HepG2 (cell line): ENCODE measurements at regions of chr3 and their contacts with region 1.

Region 1: GRCh38 chr3:4978204-4978965 is 852 bp upstream of the BHLHE40 start:
- DNase-seq: peak; percentile 91
- ATAC-seq: peak; percentile 74
- H3K4me3 ChIP-seq: peak overlapping the region; percentile 45 to 95 (median 57)
- H3K27ac ChIP-seq: peak overlapping the region; percentile 100
- H3K4me1 ChIP-seq: peaks cover 32% of the 10 kb centered on the region
- H3K27me3 ChIP-seq: no peaks in the 10 kb centered on the region; a peak in 1 of 5 replicates
- CTCF ChIP-seq: no peak; the same call in 1 of the 2 replicates
- EP300 ChIP-seq: peak; percentile 39 to 81; a peak in 3 of 4 replicates
- POLR2A ChIP-seq: peak in 1 of 2 experiments; percentile 83; a peak in 2 of 4 replicates
- RAD21 ChIP-seq: peak; percentile 28; the same call in 1 of the 2 replicates

Region 2: DNA sequence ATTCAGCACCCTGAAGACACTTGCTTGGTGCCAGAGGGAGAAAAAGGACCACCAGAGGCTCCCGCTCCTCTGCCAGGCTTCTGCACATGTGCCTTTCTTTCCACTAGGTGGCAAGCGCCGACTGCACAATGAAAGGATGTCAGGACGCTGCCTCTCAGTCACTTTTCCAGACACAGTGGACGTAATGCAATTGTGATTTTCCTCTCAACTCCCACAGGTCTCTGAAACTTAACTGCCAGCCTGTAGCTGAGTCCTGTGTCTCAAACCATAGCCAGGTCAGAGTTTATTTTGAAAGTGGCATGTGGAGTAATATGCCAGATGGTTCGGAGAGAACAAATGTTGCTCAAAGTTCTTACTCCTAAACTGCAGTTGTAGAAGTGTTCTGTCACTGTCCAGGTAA is 322.3 kb before region 1 on chr3:
- CTCF ChIA-PET with region 1: no interaction called
- POLR2A ChIA-PET with region 1: no interaction called
- in situ Hi-C with region 1: no loop called
- intact Hi-C with region 1: loop called (anchors 2 kb)
- DNase-seq: peak; percentile 30
- ATAC-seq: peak; percentile 97
- H3K4me3 ChIP-seq: no peak overlapping the region
- H3K27ac ChIP-seq: no peak overlapping the region
- H3K4me1 ChIP-seq: no peaks in the 10 kb centered on the region
- H3K27me3 ChIP-seq: no peaks in the 10 kb centered on the region
- CTCF ChIP-seq: peak; percentile 70
- EP300 ChIP-seq: no peak
- POLR2A ChIP-seq: no peak
- RAD21 ChIP-seq: peak; percentile 54

Region 3: GRCh38 chr3:4722103-4722502 is 256.3 kb before region 1 on chr3:
- CTCF ChIA-PET with region 1: interaction called, 4 read pairs
- POLR2A ChIA-PET with region 1: interaction called, 5 read pairs
- in situ Hi-C with region 1: no loop called
- intact Hi-C with region 1: loop called (anchors 1 kb)
- DNase-seq: peak; percentile 56
- ATAC-seq: peak; percentile 76
- H3K4me3 ChIP-seq: no peak overlapping the region
- H3K27ac ChIP-seq: no peak overlapping the region
- H3K4me1 ChIP-seq: peaks cover 36% of the 10 kb centered on the region
- H3K27me3 ChIP-seq: no peaks in the 10 kb centered on the region
- CTCF ChIP-seq: peak; percentile 77
- EP300 ChIP-seq: no peak
- POLR2A ChIP-seq: no peak
- RAD21 ChIP-seq: peak; percentile 44; the same call in 1 of the 2 replicates

Region 4: DNA sequence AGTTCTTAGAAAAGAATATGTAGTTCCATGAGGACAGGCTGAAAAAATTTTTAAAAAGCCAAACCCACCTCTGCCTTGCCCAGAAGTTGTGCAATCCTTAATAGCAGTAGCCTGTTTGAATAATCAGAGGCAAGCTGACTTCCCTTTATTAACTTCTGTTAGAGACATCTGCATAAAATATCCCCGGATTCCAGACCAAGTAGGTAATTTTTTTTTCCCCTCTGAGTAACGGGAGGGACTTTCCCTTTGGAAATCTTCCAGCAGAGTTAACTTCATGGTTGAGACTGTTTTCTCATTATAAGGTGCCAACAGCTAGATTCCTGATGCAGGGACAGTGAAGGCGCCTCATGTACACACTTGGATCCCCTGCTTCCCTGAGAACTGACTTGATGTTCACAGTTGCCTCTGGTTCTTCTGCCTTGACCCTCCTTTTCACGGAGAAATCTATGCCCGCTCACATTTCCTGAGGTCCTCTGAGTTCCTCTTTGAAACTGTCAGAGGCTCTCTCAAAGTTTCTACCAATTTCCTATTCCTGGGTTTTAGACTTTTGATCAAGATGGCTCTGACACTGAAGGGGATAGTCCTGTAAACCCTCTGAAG is 226.8 kb before region 1 on chr3:
- CTCF ChIA-PET with region 1: no interaction called
- POLR2A ChIA-PET with region 1: interaction called, 20 read pairs
- in situ Hi-C with region 1: no loop called
- intact Hi-C with region 1: no loop called
- DNase-seq: peak; percentile 25
- ATAC-seq: no peak
- H3K4me3 ChIP-seq: no peak overlapping the region; a peak in 1 of 6 replicates
- H3K27ac ChIP-seq: peak overlapping the region; percentile 88
- H3K4me1 ChIP-seq: peaks cover 77% of the 10 kb centered on the region
- H3K27me3 ChIP-seq: no peaks in the 10 kb centered on the region
- CTCF ChIP-seq: no peak
- EP300 ChIP-seq: no peak
- POLR2A ChIP-seq: no peak
- RAD21 ChIP-seq: no peak

Region 5: DNA sequence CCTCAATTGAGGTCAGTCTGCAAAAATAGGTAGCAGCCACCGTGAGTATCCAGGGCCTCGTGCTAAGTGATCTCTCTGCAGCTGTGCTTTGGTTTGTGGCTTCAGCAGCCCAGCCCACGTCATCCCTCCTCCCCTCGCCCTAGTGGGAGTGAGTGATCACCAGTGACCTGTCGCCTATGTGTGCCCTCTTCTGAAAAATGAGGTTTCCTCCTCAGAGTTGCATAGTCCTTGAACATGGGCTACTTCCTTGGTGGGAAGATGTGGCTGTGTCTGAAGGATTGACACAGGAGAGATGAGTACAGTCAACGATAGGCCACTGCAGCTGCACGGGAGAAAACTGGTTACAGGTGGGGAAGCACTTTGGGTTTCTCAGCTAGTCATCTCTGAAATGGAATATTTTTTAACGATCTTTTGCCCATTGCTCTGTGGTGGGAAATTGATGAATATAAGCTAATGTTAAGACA is 143.9 kb before region 1 on chr3:
- CTCF ChIA-PET with region 1: no interaction called
- POLR2A ChIA-PET with region 1: no interaction called
- in situ Hi-C with region 1: no loop called
- intact Hi-C with region 1: no loop called
- DNase-seq: no peak
- ATAC-seq: no peak
- H3K4me3 ChIP-seq: no peak overlapping the region
- H3K27ac ChIP-seq: no peak overlapping the region
- H3K4me1 ChIP-seq: no peaks in the 10 kb centered on the region
- H3K27me3 ChIP-seq: no peaks in the 10 kb centered on the region
- CTCF ChIP-seq: no peak
- EP300 ChIP-seq: no peak
- POLR2A ChIP-seq: no peak
- RAD21 ChIP-seq: no peak

Region 6: GRCh38 chr3:4866841-4867240 is 111.5 kb before region 1 on chr3:
- CTCF ChIA-PET with region 1: no interaction called
- POLR2A ChIA-PET with region 1: no interaction called
- in situ Hi-C with region 1: no loop called
- intact Hi-C with region 1: no loop called
- DNase-seq: no peak
- ATAC-seq: no peak
- H3K4me3 ChIP-seq: no peak overlapping the region
- H3K27ac ChIP-seq: no peak overlapping the region
- H3K4me1 ChIP-seq: peaks cover 15% of the 10 kb centered on the region
- H3K27me3 ChIP-seq: no peaks in the 10 kb centered on the region
- CTCF ChIP-seq: no peak
- EP300 ChIP-seq: no peak
- POLR2A ChIP-seq: no peak
- RAD21 ChIP-seq: no peak

Region 7: DNA sequence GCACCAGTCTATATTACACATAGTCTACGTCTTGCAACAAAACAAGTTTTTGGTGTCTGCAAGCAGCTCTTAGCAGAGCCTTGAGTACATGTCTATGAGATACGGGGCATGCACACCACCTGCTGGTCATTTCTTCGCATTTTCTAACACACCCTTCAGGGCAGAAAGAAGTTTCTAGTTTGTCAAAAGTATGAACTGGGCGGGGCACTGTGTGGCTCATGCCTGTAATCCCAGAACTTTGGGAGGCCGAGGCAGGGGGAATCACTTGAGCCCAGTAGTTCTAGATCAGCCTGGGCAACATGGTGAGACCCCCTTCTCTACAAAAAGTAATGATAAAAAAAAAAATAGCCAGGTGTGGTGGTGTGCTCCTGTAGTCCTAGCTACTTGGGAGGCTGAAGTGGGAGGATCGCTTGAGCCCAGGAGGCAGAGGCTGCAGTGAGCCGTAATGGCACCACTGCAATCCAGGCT is 79.5 kb after region 1 on chr3:
- CTCF ChIA-PET with region 1: no interaction called
- POLR2A ChIA-PET with region 1: no interaction called
- in situ Hi-C with region 1: no loop called
- intact Hi-C with region 1: loop called (anchors 2 kb)
- DNase-seq: peak; percentile 60
- ATAC-seq: peak; percentile 94
- H3K4me3 ChIP-seq: no peak overlapping the region
- H3K27ac ChIP-seq: no peak overlapping the region
- H3K4me1 ChIP-seq: peaks cover 6% of the 10 kb centered on the region; the same call in 1 of the 2 replicates
- H3K27me3 ChIP-seq: peaks cover 0 to 22% of the 10 kb centered on the region in 2 experiments; a peak in 2 of 5 replicates
- CTCF ChIP-seq: peak; percentile 81
- EP300 ChIP-seq: no peak
- POLR2A ChIP-seq: no peak
- RAD21 ChIP-seq: peak; percentile 77